ENCODE measurements at regions of chr16 and their contacts with region 1.

Region 1: DNA sequence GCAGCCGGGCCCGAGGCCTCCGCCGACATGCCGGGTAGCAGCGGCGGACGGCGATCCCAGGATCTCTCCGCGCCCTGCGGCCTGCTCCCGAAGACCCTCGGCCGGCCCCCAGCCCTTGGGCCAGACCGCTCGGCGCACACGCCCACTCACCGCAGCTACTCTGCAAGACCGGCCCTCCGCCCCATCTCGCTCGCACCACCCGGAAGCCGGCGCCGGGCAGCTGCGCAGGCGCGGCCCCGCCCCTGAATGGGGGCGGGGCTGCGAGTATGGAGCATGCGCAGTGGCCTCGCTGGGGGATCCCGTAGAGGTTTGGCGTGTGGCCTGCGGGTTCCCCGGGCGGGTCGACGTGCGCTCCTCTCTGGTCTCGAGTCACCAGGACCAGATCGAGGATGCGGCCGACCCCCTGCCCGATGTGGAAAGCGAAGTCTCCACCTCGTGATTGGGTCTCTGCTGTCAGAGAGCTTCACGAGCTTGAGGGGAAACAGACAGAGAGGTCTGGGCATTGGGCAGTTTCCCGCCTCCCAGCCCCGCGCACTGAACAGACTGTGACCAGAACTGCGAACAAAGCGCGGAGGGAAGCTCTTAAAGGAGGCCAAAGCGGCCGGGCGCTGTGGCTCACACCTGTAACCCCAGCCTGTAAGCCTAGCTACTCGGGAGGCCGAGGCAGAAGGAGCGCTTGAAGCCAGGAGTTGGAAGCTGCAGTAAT is at the start of gene KCTD13:
- DNase-seq: peak; percentile 82
- H3K4me3 Mint-ChIP-seq: peak within 1 kb of the TSS; percentile 96
- H3K27ac Mint-ChIP-seq: peak within 1 kb of the TSS; percentile 91
- H3K4me1 Mint-ChIP-seq: peaks cover 27% of the 10 kb centered on the region
- H3K27me3 Mint-ChIP-seq: no peaks in the 10 kb centered on the region
- CTCF ChIP-seq: no peak
- total RNA-seq, gene KCTD13: 35.5 and 38.9 TPM in 2 replicates

Region 2: DNA sequence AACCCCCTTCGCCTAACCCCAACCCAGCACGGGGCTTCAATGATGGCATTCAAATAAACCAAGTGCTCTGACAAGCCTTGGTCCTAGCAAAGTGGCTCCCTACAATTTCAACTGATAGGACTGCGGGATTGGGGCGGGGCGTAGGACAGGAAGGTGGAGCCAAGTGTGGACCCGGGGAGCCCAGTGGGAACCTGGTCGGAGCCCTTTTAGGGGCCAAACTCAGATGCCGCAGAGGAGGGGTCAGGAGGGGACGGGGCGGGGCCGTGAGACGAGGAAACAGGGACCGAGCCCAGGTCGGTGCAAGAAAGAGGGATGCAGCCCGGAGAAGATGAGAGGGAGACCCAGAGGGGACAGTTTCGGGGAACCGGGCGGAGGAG is 50.0 kb before region 1 on chr16:
- CTCF ChIA-PET with region 1: no interaction called
- POLR2A ChIA-PET with region 1: no interaction called
- intact Hi-C with region 1: no loop called
- DNase-seq: no peak
- H3K4me3 Mint-ChIP-seq: no peak overlapping the region
- H3K27ac Mint-ChIP-seq: no peak overlapping the region
- H3K4me1 Mint-ChIP-seq: no peaks in the 10 kb centered on the region
- H3K27me3 Mint-ChIP-seq: peaks cover 10% of the 10 kb centered on the region
- CTCF ChIP-seq: no peak

Region 3: GRCh38 chr16:29900102-29900887 is 25.9 kb before region 1 on chr16 and contains the start of gene ASPHD1:
- CTCF ChIA-PET with region 1: interaction called, 3 read pairs
- POLR2A ChIA-PET with region 1: interaction called, 12 read pairs
- intact Hi-C with region 1: no loop called
- DNase-seq: peak; percentile 65
- H3K4me3 Mint-ChIP-seq: peak within 1 kb of the TSS; percentile 91
- H3K27ac Mint-ChIP-seq: peak within 1 kb of the TSS; percentile 81
- H3K4me1 Mint-ChIP-seq: peaks cover 10% of the 10 kb centered on the region
- H3K27me3 Mint-ChIP-seq: peaks cover 27% of the 10 kb centered on the region
- CTCF ChIP-seq: no peak
- total RNA-seq, gene ASPHD1: 4.8 and 5.7 TPM in 2 replicates

Region 4: GRCh38 chr16:29915590-29916247 is 10.4 kb before region 1 on chr16:
- CTCF ChIA-PET with region 1: interaction called, 3 read pairs
- POLR2A ChIA-PET with region 1: interaction called, 14 read pairs
- intact Hi-C with region 1: no loop called
- DNase-seq: no peak
- H3K4me3 Mint-ChIP-seq: no peak overlapping the region
- H3K27ac Mint-ChIP-seq: no peak overlapping the region
- H3K4me1 Mint-ChIP-seq: no peaks in the 10 kb centered on the region
- H3K27me3 Mint-ChIP-seq: no peaks in the 10 kb centered on the region
- CTCF ChIP-seq: no peak

Region 5: GRCh38 chr16:29943846-29944669 is 17.9 kb after region 1 on chr16:
- CTCF ChIA-PET with region 1: interaction called, 7 read pairs
- POLR2A ChIA-PET with region 1: interaction called, 54 read pairs
- intact Hi-C with region 1: loop called (anchors 1 kb)
- DNase-seq: peak; percentile 96
- H3K4me3 Mint-ChIP-seq: peak overlapping the region; percentile 24
- H3K27ac Mint-ChIP-seq: peak overlapping the region; percentile 65
- H3K4me1 Mint-ChIP-seq: peaks cover 8% of the 10 kb centered on the region
- H3K27me3 Mint-ChIP-seq: no peaks in the 10 kb centered on the region
- CTCF ChIP-seq: no peak

Region 6: GRCh38 chr16:29961479-29962343 is 35.6 kb after region 1 on chr16 and contains the start of gene TMEM219:
- CTCF ChIA-PET with region 1: interaction called, 7 read pairs
- POLR2A ChIA-PET with region 1: interaction called, 42 read pairs
- intact Hi-C with region 1: loop called (anchors 1 kb)
- DNase-seq: peak; percentile 77
- H3K4me3 Mint-ChIP-seq: peak within 1 kb of the TSS; percentile 89
- H3K27ac Mint-ChIP-seq: peak within 1 kb of the TSS; percentile 77
- H3K4me1 Mint-ChIP-seq: peaks cover 16% of the 10 kb centered on the region
- H3K27me3 Mint-ChIP-seq: no peaks in the 10 kb centered on the region
- CTCF ChIP-seq: peak; percentile 14
- total RNA-seq, gene TMEM219: 62.1 and 68.1 TPM in 2 replicates

Region 7: DNA sequence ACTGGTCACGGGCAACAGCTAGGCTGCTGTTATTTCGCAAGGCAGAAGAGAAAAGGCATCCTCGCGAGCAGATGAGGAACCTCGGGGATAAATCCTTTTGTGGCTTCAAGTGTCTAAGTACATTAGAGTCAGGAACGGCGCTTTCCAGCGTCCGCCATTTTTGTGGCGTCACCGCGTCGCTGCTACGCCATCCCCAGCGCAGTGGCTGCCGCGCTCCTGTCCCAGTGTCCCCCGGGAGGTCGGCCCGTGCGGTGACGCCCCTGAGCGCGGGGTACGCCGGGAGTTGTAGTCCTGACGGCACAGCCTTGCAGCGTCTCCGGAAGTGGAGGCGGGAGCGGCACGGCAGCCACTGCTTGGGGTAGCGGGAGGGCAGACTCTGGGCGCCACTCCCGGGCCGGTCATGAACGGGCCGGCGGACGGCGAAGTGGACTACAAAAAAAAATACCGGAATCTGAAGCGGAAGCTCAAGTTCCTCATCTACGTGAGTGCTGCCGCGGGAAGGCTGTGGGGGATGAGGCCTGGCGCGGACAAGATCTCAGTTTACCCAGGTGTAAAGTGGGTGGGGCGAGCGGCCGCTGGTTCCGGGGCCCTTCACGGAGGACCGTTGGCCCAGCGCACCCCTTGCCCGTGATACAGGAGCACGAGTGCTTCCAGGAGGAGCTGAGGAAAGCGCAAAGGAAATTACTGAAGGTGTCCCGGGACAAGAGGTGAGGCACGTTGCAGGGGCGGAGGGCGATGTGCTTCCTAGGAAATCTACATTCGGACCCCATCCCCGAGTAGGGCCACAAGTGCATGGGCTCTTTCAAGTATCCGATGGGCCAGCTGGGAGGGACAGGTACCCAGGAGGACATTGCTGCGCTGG is 70.0 kb after region 1 on chr16 and contains the start of gene INO80E:
- CTCF ChIA-PET with region 1: interaction called, 3 read pairs
- POLR2A ChIA-PET with region 1: interaction called, 29 read pairs
- intact Hi-C with region 1: loop called (anchors 5 kb)
- DNase-seq: peak; percentile 96
- H3K4me3 Mint-ChIP-seq: peak within 1 kb of the TSS; percentile 98
- H3K27ac Mint-ChIP-seq: peak within 1 kb of the TSS; percentile 95
- H3K4me1 Mint-ChIP-seq: peaks cover 11% of the 10 kb centered on the region
- H3K27me3 Mint-ChIP-seq: no peaks in the 10 kb centered on the region
- CTCF ChIP-seq: no peak
- total RNA-seq, gene INO80E: 82.0 and 90.1 TPM in 2 replicates

Region 8: GRCh38 chr16:30032083-30032819 is 106.1 kb after region 1 on chr16:
- CTCF ChIA-PET with region 1: interaction called, 14 read pairs
- POLR2A ChIA-PET with region 1: no interaction called
- intact Hi-C with region 1: no loop called
- DNase-seq: peak; percentile 72
- H3K4me3 Mint-ChIP-seq: no peak overlapping the region
- H3K27ac Mint-ChIP-seq: no peak overlapping the region
- H3K4me1 Mint-ChIP-seq: no peaks in the 10 kb centered on the region
- H3K27me3 Mint-ChIP-seq: peaks cover 34% of the 10 kb centered on the region
- CTCF ChIP-seq: peak; percentile 84

Measured in MCF 10A (cell line).